ENCODE measurements at regions of chr10 and their contacts with region 1.

Region 1: DNA sequence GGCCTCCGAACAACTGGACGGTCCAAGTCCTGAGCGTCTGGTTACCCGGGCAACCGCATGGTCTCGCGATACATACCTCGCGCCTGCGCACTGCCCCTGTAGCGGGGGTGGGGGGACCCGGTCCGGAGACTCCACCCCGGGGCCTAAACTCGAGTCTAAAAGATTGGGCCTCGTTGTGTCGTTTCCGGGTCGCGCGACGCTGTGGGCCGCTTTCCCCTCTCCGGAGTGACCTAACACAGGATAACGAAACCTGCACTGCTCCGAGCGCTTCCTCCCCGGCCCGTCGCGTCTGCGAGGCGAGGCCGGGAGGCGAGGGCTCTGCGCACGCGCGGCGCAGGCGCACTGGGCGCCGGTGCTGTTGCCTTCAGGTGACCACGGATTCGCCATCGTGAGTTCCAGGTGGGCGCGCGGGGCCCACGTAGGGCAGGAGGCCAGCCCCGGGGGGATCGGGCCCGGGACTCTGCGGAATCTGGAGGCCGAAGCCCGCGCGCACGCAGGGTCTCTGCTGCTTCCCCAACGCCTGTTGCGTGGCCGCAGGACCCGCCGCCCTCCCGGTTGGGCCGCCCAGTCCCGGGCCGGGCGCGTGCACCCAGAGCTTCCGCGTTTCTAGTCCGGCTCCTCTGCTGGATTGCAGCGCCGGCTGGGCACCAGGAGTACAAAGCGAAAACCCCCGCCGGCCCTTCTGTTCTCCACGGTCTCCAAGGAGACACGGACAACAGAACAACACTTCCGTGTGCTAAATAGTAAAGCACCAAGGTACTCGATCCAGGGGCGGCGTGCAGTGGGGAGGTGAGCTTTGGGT is at the start of gene RPP38:
- DNase-seq: peak; percentile 94
- H3K4me3 Mint-ChIP-seq: peak within 1 kb of the TSS; percentile 87
- H3K27ac Mint-ChIP-seq: peak within 1 kb of the TSS; percentile 87
- H3K4me1 Mint-ChIP-seq: peaks cover 24% of the 10 kb centered on the region
- H3K27me3 Mint-ChIP-seq: peaks cover 6% of the 10 kb centered on the region
- total RNA-seq, gene RPP38: 14.9 to 16.8 TPM

Region 2: DNA sequence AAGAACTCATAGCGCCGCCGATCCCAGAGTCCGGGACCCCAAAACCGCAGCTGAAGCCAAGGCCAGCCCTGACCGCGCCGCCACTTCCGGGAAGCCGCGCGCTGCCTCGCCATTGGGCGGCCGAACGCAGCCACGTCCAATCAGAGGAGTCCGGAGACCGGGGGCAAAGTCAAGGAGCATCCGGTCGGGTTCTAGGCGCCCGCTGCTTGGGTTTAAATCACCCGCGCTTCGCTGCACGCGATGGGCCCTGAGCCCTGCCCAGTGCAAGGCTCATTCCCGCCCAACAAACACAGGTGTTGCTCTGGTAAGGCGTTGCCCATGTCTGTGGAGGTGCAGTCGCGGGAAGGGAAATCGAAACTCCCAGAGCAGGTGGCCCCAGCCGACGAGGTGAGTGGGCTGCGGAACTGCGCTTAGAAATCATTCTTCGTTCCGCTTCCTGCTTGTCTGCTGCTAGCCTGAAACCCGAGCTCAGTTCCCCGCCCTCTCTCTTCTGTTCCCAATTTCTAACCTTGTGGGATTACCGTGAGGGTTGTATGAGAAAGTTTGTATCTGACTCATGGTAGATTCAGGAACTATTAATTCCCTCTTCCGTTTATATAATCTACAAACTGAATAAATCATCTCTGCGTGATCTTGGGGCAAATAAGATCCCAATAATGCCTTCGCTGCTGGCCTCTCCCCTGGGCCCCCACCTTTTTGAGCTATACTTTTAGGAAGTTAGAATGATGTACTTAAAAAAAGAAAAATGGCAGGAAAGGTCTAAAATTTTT is 143.0 kb before region 1 on chr10 and contains the start of gene DCLRE1C:
- CTCF ChIA-PET with region 1: interaction called, 5 read pairs
- POLR2A ChIA-PET with region 1: interaction called, 21 read pairs
- DNase-seq: peak; percentile 93
- H3K4me3 Mint-ChIP-seq: peak within 1 kb of the TSS; percentile 87
- H3K27ac Mint-ChIP-seq: peak within 1 kb of the TSS; percentile 93
- H3K4me1 Mint-ChIP-seq: peaks cover 64% of the 10 kb centered on the region
- H3K27me3 Mint-ChIP-seq: no peaks in the 10 kb centered on the region
- total RNA-seq, gene DCLRE1C: 36.8 to 40.4 TPM

Region 3: GRCh38 chr10:14959276-14960057 is 137.7 kb before region 1 on chr10 and contains the start of gene MEIG1:
- CTCF ChIA-PET with region 1: no interaction called
- POLR2A ChIA-PET with region 1: interaction called, 21 read pairs
- DNase-seq: peak; percentile 92
- H3K4me3 Mint-ChIP-seq: peak within 1 kb of the TSS; percentile 88
- H3K27ac Mint-ChIP-seq: peak within 1 kb of the TSS; percentile 96
- H3K4me1 Mint-ChIP-seq: peaks cover 42% of the 10 kb centered on the region
- H3K27me3 Mint-ChIP-seq: no peaks in the 10 kb centered on the region
- total RNA-seq, gene MEIG1: 0.75 to 1.3 TPM

Region 4: GRCh38 chr10:15150563-15150962 is 53.4 kb after region 1 on chr10:
- CTCF ChIA-PET with region 1: no interaction called
- POLR2A ChIA-PET with region 1: no interaction called
- DNase-seq: no peak
- H3K4me3 Mint-ChIP-seq: no peak overlapping the region
- H3K27ac Mint-ChIP-seq: no peak overlapping the region
- H3K4me1 Mint-ChIP-seq: peaks cover 14% of the 10 kb centered on the region
- H3K27me3 Mint-ChIP-seq: no peaks in the 10 kb centered on the region

Measured in activated CD4-positive, alpha-beta memory T cell treated with anti-CD3 and anti-CD28 coated beads, Interleukin-2, amount 10 ng/mL, durations not matched to agents 7 days and 5 days (primary cell).